Heart right ventricle (tissue), 16 donors: ENCODE measurements at regions of chr2 and their contacts with region 1.

Region 1: GRCh38 chr2:100242891-100243619 is 79.2 kb downstream of the LONRF2 start:
- DNase-seq: peak; percentile 69 to 75
- ATAC-seq: peak; percentile 67 to 87 (median 82)
- H3K4me3 ChIP-seq: no peak overlapping the region
- H3K27ac ChIP-seq: peak overlapping the region in 1 of 10 donors; percentile 60
- H3K4me1 ChIP-seq: peaks cover 0 to 12% (median 5%) of the 10 kb centered on the region in 9 donors
- H3K27me3 ChIP-seq: peaks cover 0 to 5% (median 0%) of the 10 kb centered on the region in 7 donors
- CTCF ChIP-seq: peak; percentile 52 to 88 (median 80)

Region 2: GRCh38 chr2:99559075-99559662 is 683.9 kb before region 1 on chr2:
- intact Hi-C with region 1: loop called (anchors 1 to 5 kb)
- DNase-seq: peak; percentile 86 to 89
- ATAC-seq: peak; percentile 93 to 96 (median 94)
- H3K4me3 ChIP-seq: no peak overlapping the region
- H3K27ac ChIP-seq: no peak overlapping the region
- H3K4me1 ChIP-seq: peaks cover 0 to 7% (median 0%) of the 10 kb centered on the region in 9 donors
- H3K27me3 ChIP-seq: no peaks in the 10 kb centered on the region
- CTCF ChIP-seq: peak; percentile 96 to 100 (median 99)

Region 3: DNA sequence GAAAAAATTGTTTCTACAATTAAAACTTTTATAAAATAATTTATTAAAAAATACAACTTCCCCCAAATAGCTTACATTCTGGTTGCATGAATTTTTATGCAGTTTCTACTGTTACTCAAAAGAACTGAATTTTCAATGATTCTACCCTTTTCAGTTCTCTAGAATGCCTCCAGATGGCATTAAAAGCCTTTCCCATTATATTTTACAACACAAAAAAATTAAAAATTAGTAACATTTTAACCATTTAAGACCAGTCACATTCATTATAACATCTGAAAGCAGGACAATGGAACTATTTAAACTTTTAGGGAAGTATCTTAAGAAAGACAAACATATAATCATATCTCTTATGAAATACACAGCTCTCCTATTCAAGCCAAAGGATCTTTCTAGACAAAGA is 517.2 kb before region 1 on chr2:
- intact Hi-C with region 1: loop called in 6 of 10 experiments (anchors 1 to 10 kb)
- DNase-seq: no peak
- ATAC-seq: no peak
- H3K4me3 ChIP-seq: no peak overlapping the region
- H3K27ac ChIP-seq: no peak overlapping the region
- H3K4me1 ChIP-seq: peaks cover 0 to 40% (median 20%) of the 10 kb centered on the region in 9 donors
- H3K27me3 ChIP-seq: no peaks in the 10 kb centered on the region
- CTCF ChIP-seq: peak in 7 of 9 donors; percentile 19 to 58 (median 48)

Region 4: DNA sequence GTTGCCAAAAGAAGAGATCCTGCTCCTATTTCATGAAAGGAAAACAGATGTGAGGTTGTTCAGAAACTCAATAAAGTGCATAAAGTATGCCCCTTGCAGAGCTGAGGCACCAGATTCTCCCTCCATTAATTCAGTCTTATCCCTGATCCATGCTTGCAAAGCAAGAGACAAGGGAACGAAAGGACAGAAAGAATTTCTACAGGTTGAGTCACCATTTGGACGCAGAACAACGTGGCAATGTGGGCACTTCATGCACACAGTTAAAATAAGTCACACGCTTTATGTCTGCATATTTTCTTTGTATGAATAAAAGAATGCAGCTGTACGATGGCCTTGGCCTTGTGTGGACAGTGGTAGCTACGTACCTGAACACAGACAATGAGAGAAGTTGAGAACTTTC is 431.5 kb before region 1 on chr2:
- intact Hi-C with region 1: loop called in 7 of 10 experiments (anchors 5 to 10 kb)
- DNase-seq: no peak
- ATAC-seq: peak in 2 of 8 donors; percentile 28 to 29
- H3K4me3 ChIP-seq: no peak overlapping the region
- H3K27ac ChIP-seq: no peak overlapping the region
- H3K4me1 ChIP-seq: no peaks in the 10 kb centered on the region
- H3K27me3 ChIP-seq: no peaks in the 10 kb centered on the region
- CTCF ChIP-seq: no peak

Region 5: GRCh38 chr2:99818842-99819241 is 424.2 kb before region 1 on chr2:
- intact Hi-C with region 1: loop called (anchors 5 to 10 kb)
- DNase-seq: no peak
- ATAC-seq: no peak
- H3K4me3 ChIP-seq: no peak overlapping the region
- H3K27ac ChIP-seq: no peak overlapping the region
- H3K4me1 ChIP-seq: peaks cover 0 to 5% (median 0%) of the 10 kb centered on the region in 9 donors
- H3K27me3 ChIP-seq: no peaks in the 10 kb centered on the region
- CTCF ChIP-seq: peak in 7 of 9 donors; percentile 8 to 43 (median 25)

Region 6: DNA sequence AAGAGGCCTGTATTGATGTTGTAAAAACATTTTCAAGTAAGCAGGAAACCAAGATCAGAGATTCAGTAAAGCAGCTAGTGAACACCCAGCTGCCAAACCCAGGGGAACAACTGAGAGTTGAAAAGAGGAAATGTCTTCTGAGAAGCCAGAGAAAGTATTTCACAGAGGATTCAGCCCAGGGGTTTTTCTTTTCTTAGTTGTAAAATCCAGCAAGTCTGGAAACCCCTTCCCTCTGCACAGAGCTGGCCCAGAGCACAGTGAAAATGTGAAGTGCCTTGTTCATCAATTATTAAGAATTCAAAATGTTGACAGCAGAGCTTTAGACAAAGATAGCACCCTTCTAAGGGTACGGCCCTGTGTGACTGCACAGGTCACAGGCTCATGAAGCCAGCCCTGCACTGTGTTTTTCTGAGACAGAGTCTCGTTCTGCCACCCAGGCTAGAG is 129.0 kb before region 1 on chr2:
- intact Hi-C with region 1: loop called in 2 of 10 experiments (anchors 10 kb)
- DNase-seq: no peak
- ATAC-seq: no peak
- H3K4me3 ChIP-seq: no peak overlapping the region
- H3K27ac ChIP-seq: no peak overlapping the region
- H3K4me1 ChIP-seq: no peaks in the 10 kb centered on the region
- H3K27me3 ChIP-seq: peaks cover 0 to 15% (median 0%) of the 10 kb centered on the region in 7 donors
- CTCF ChIP-seq: no peak

Region 7: GRCh38 chr2:100178051-100178788 is 64.8 kb before region 1 on chr2:
- intact Hi-C with region 1: loop called in 5 of 10 experiments (anchors 1 to 10 kb)
- DNase-seq: no peak
- ATAC-seq: peak in 2 of 8 donors; percentile 29 to 46
- H3K4me3 ChIP-seq: no peak overlapping the region
- H3K27ac ChIP-seq: no peak overlapping the region
- H3K4me1 ChIP-seq: peaks cover 0 to 10% (median 5%) of the 10 kb centered on the region in 9 donors
- H3K27me3 ChIP-seq: no peaks in the 10 kb centered on the region
- CTCF ChIP-seq: peak in 8 of 9 donors; percentile 19 to 52 (median 39)